Right lobe of liver (tissue), 6 donors: ENCODE measurements at regions of chr1 and their contacts with region 1.

Region 1: DNA sequence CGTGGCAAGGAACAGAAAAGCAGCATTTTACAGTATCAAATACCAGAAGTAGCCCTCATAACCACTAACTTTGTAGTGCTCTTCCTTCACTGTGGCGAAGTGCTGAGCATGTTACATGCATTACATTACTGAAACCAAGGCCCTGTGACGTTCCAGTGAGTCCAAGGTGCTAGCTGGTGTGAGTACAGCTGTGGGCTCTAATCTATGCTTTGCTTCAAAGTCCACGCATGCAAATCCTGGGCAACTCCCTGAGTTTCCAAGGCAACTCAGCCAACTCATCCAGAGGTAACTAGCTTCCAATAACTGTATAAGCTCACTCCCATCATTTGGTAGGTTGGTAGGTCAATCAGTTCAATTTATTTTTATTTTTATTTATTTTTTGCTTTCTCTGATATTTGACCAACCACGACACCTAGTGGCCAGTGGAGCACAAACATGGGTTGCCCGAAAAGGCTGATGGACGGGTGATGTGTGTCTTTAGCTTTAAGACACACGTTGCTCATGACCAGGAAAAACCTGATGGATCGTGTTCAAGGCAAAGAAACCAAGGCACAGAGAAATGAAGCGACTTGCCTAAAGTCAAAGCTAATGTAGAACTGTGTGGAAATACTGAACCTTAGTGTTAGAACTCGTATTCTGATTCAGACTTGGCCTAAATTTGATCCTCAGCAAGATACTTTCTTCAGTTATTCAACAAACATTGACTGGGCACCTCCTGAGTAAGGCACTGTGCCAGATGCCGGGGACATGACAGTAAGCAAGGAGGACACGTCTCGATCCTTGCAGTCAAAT is 73.0 kb downstream of the GNG12 start:
- DNase-seq: peak; percentile 45 to 90 (median 82)
- ATAC-seq: peak; percentile 91 to 98 (median 96)
- H3K4me3 ChIP-seq: no peak overlapping the region
- H3K27ac ChIP-seq: peak overlapping the region; percentile 67 to 95 (median 84)
- H3K4me1 ChIP-seq: peaks cover 0 to 22% (median 10%) of the 10 kb centered on the region in 4 donors
- H3K27me3 ChIP-seq: no peaks in the 10 kb centered on the region
- CTCF ChIP-seq: peak; percentile 79 to 87 (median 84)
- POLR2A ChIP-seq: peak; percentile 61

Region 2: DNA sequence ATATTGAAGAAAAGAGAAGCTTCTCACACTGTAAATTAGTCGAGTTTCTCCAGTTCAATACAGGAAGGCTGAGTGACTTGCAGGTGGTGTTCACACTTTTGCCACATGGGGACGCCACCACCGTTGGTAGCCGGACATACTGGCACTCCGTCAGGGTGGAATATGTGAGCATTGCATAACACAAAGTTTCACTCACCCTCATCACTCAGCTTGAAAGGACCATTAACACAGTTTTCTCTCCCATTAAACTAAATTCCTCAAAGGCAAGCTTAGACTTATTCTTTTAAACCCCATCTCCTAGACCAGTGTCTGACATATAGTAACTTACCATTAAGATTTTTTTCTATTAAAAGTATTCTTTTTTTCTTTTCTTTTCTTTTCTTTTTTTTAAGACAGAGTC is 224.8 kb before region 1 on chr1:
- intact Hi-C with region 1: loop called (anchors 10 kb)
- DNase-seq: peak; percentile 78 to 90 (median 85)
- ATAC-seq: peak; percentile 65 to 81 (median 70)
- H3K4me3 ChIP-seq: no peak overlapping the region
- H3K27ac ChIP-seq: peak overlapping the region; percentile 11 to 98 (median 69)
- H3K4me1 ChIP-seq: peaks cover 0 to 81% (median 22%) of the 10 kb centered on the region in 4 donors
- H3K27me3 ChIP-seq: no peaks in the 10 kb centered on the region
- CTCF ChIP-seq: peak; percentile 96 to 98 (median 97)
- POLR2A ChIP-seq: no peak

Region 3: DNA sequence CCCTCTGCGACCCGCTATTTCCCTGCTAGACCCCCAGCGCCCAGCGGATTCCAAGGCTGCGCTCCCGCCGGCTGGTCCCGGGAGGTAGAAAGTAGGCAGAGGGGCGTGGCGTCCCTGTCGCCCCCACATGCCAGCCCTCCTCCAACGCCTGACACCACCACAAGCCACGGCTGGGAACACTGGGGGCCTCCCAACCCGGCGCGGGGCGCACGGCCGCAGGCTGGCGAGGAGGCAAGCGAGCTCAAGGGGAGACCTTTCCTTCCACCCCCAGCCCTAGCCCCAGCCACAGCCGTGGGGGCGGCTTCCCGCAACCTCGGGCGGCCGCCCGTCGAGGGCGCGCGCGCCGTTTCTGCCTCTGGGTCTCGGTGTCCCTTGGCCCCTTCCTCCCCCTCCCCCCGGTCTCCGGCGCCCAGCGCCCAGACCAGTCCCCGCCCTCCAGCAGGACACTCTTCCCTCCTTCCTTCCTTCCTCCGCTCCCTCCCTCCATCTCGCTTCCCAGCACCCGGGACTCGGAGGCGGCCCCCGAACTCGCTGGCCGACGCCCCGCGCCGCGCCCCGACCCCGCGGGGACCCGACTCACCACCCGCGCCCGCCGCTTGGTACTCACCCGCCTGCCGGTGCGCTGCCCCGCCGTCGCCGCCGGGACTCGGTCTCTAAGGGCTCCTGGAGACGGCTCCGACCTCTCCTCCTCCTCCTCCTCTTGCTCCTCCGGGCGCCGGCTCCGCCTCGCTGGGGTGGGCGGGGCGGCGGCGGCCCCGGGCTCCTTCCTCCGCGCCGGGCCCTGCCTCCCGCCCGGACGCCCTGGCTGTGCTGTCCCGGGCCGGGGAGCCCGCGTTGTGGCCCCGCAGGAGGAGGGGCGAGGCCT is 72.7 kb after region 1 on chr1 and contains the start of gene GNG12:
- intact Hi-C with region 1: loop called in 1 of 2 experiments (anchors 10 kb)
- DNase-seq: peak; percentile 75 to 82 (median 80)
- ATAC-seq: peak; percentile 55 to 76 (median 74)
- H3K4me3 ChIP-seq: peak within 1 kb of the TSS; percentile 71 to 82 (median 80)
- H3K27ac ChIP-seq: peak within 1 kb of the TSS; percentile 55 to 90 (median 88)
- H3K4me1 ChIP-seq: peaks cover 0 to 20% (median 9%) of the 10 kb centered on the region in 4 donors
- H3K27me3 ChIP-seq: no peaks in the 10 kb centered on the region
- CTCF ChIP-seq: no peak
- POLR2A ChIP-seq: peak; percentile 46
- total RNA-seq, gene GNG12: 18.8 to 52.7 (median 33.9) TPM

Region 4: GRCh38 chr1:67970088-67970487 is 209.9 kb after region 1 on chr1:
- intact Hi-C with region 1: no loop called
- DNase-seq: no peak
- ATAC-seq: no peak
- H3K4me3 ChIP-seq: no peak overlapping the region
- H3K27ac ChIP-seq: no peak overlapping the region
- H3K4me1 ChIP-seq: peaks cover 0 to 13% (median 2%) of the 10 kb centered on the region in 4 donors
- H3K27me3 ChIP-seq: no peaks in the 10 kb centered on the region
- CTCF ChIP-seq: no peak
- POLR2A ChIP-seq: no peak